Posterior cingulate gyrus (tissue), 11 donors: ENCODE measurements at regions of chr17 and their contacts with region 1.

Region 1: DNA sequence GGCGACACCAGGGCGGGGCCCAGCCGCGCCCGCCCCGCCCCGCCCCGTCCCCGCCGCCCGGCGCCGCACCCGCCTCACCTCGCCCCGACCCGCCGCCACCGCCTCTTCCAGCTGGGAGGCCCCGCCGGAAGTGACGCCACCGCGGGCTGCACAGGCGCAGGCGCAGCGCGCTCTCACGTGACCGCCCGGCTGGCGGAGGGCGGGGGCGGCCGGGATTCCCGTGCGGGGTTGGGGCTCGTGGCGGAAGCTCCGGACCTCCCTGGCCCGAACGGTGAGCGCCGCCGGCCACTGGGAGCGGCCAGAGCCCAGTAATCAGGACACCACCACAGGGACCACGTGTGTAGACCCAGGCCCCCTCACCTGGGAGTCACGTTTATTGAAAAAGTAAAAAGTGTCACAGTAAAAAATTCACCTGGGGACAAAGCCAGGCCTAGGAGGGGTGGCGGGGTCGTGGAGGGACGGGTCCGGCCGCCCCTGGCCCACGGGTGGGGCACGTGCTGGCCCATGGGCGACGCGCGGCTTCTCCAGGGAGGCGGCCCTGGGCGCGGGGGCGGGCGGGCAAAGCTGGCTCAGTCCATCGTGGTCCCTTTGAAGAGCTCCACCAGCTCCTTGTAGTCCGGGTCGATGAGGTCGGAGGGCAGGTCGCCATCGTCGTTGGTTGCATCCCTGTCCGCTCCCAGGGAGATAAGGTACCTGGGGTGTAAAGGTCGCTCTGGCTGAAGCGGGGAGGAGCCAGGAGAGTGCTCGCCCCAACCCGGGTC is at the start of gene MCRIP1:
- DNase-seq: peak; percentile 84 to 99 (median 90)

Region 2: DNA sequence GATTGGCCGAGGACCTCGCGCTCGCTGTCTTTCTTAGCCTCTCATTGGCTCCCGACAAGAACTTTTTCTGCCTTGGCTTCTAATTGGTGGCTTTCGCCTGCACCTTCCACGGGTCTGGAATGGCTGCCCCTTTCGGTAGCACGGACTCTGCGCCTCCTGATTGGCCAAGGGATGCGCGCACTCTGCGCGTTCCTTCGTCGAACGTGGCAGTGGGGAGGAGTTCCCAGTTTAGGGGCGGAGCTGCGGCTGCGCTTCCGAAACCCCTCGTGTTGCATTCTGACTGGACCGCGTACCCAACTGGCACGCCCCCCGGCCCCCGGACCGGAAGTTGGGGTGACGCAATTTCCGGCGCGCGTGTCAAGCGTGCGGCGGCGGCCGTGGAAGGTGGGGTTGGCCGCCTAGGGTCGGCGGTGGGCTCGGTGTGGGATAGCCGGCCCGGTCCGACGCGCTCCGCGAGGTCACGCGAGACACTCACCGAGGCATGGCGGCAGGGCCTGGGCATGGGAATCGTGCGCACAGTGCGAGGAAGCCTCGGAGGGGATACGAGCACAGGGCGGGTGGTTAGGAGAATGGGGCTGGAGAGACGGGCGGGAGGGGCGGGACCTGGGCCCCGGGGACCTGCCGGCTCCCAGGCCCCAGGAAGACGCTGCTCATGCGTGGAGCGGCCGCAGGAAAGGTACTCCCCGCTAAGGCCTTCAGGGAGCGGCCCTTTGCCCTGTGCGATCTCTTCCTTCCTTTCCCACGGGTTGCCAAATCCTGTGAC is 27.6 kb after region 1 on chr17:
- intact Hi-C with region 1: loop called (anchors 1 kb)
- DNase-seq: peak; percentile 99 to 100 (median 100)